Aorta (tissue), 5 donors: ENCODE measurements at regions of chr12 and their contacts with region 1.

Region 1: GRCh38 chr12:86367137-86367536 is 110.9 kb upstream of the MGAT4C start:
- DNase-seq: no peak
- ATAC-seq: no peak
- H3K4me3 ChIP-seq: no peak overlapping the region
- H3K27ac ChIP-seq: no peak overlapping the region
- H3K4me1 ChIP-seq: no peaks in the 10 kb centered on the region
- H3K27me3 ChIP-seq: no peaks in the 10 kb centered on the region

Region 2: GRCh38 chr12:86349196-86349595 is 17.9 kb before region 1 on chr12:
- intact Hi-C with region 1: loop called in 1 of 2 experiments (anchors 1 kb)
- DNase-seq: no peak
- ATAC-seq: no peak
- H3K4me3 ChIP-seq: no peak overlapping the region
- H3K27ac ChIP-seq: no peak overlapping the region
- H3K4me1 ChIP-seq: no peaks in the 10 kb centered on the region
- H3K27me3 ChIP-seq: no peaks in the 10 kb centered on the region